ENCODE measurements at regions of chr20 and their contacts with region 1.

Region 1: GRCh38 chr20:1509237-1509636 is 18.0 kb upstream of the SIRPB2 start:
- DNase-seq: peak; percentile 49
- H3K4me3 Mint-ChIP-seq: no peak overlapping the region
- H3K27ac Mint-ChIP-seq: no peak overlapping the region
- H3K4me1 Mint-ChIP-seq: peaks cover 24% of the 10 kb centered on the region
- H3K27me3 Mint-ChIP-seq: peaks cover 14% of the 10 kb centered on the region
- CTCF ChIP-seq: peak; percentile 65

Region 2: GRCh38 chr20:1301031-1301529 is 208.2 kb before region 1 on chr20:
- CTCF ChIA-PET with region 1: no interaction called
- POLR2A ChIA-PET with region 1: no interaction called
- intact Hi-C with region 1: no loop called
- DNase-seq: peak; percentile 58
- H3K4me3 Mint-ChIP-seq: no peak overlapping the region
- H3K27ac Mint-ChIP-seq: peak overlapping the region; percentile 20
- H3K4me1 Mint-ChIP-seq: peaks cover 15% of the 10 kb centered on the region
- H3K27me3 Mint-ChIP-seq: no peaks in the 10 kb centered on the region
- CTCF ChIP-seq: no peak

Region 3: GRCh38 chr20:1528811-1529210 is 19.6 kb after region 1 on chr20:
- CTCF ChIA-PET with region 1: interaction called, 16 read pairs
- POLR2A ChIA-PET with region 1: interaction called, 3 read pairs
- intact Hi-C with region 1: no loop called
- DNase-seq: peak; percentile 65
- H3K4me3 Mint-ChIP-seq: no peak overlapping the region
- H3K27ac Mint-ChIP-seq: no peak overlapping the region
- H3K4me1 Mint-ChIP-seq: no peaks in the 10 kb centered on the region
- H3K27me3 Mint-ChIP-seq: no peaks in the 10 kb centered on the region
- CTCF ChIP-seq: no peak

Region 4: GRCh38 chr20:1539816-1540419 is 30.7 kb after region 1 on chr20:
- CTCF ChIA-PET with region 1: no interaction called
- POLR2A ChIA-PET with region 1: no interaction called
- intact Hi-C with region 1: no loop called
- DNase-seq: no peak
- H3K4me3 Mint-ChIP-seq: no peak overlapping the region
- H3K27ac Mint-ChIP-seq: no peak overlapping the region
- H3K4me1 Mint-ChIP-seq: no peaks in the 10 kb centered on the region
- H3K27me3 Mint-ChIP-seq: peaks cover 12% of the 10 kb centered on the region
- CTCF ChIP-seq: no peak

Region 5: DNA sequence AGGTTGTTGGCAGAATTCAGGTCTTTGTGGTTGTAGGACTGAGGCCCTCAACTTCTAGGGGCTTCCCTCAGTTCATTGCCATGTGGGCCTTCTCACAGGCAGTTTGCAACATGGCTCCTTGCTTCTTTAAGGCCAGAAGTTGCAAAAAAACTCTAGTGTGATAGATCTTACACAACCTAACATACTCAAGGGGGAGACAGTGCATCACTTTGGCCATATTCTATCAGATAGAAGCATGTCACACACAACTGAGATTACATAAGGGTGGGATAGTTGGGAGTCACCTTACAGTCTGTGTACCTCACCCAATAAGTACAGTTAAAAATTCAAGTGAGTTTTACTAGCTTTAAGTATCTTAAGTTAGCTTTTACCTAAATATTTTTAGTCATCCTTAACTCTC is 46.7 kb after region 1 on chr20:
- CTCF ChIA-PET with region 1: no interaction called
- POLR2A ChIA-PET with region 1: no interaction called
- intact Hi-C with region 1: no loop called
- DNase-seq: no peak
- H3K4me3 Mint-ChIP-seq: no peak overlapping the region
- H3K27ac Mint-ChIP-seq: no peak overlapping the region
- H3K4me1 Mint-ChIP-seq: no peaks in the 10 kb centered on the region
- H3K27me3 Mint-ChIP-seq: no peaks in the 10 kb centered on the region
- CTCF ChIP-seq: no peak

Region 6: GRCh38 chr20:1718604-1719384 is 209.6 kb after region 1 on chr20:
- CTCF ChIA-PET with region 1: interaction called, 15 read pairs
- POLR2A ChIA-PET with region 1: interaction called, 14 read pairs
- intact Hi-C with region 1: no loop called
- DNase-seq: peak; percentile 98
- H3K4me3 Mint-ChIP-seq: peak overlapping the region; percentile 4
- H3K27ac Mint-ChIP-seq: peak overlapping the region; percentile 37
- H3K4me1 Mint-ChIP-seq: peaks cover 22% of the 10 kb centered on the region
- H3K27me3 Mint-ChIP-seq: no peaks in the 10 kb centered on the region
- CTCF ChIP-seq: no peak

Region 7: DNA sequence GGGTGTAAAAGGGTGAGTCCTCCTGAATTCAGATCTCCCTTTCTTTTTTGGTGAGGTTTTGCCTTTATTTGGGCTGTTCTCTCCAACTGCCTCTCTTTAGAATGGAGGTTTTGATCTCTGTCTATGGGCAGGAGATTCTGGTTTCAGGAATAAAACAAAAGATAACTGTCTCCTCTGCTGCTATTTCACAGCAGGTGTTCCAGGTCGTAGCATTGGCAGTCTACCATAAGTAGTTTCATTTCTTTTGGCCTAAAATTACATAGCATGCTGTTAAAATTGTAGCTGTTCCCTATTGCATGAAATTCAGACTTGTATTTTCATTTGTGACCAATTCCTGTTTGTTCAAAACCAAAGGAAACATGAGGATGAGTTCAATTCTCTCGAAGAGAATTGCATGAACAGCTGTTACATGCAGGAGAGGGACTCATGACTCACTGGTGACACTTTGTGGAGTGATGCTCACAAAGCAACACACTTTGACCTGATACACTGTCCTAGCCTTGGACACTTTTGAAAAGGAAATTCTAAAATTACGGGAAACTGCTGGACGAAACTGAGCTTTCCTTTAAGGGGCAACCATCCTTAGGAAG is 225.1 kb after region 1 on chr20:
- CTCF ChIA-PET with region 1: interaction called, 152 read pairs
- POLR2A ChIA-PET with region 1: interaction called, 20 read pairs
- intact Hi-C with region 1: loop called (anchors 1 kb)
- DNase-seq: peak; percentile 52
- H3K4me3 Mint-ChIP-seq: no peak overlapping the region
- H3K27ac Mint-ChIP-seq: no peak overlapping the region
- H3K4me1 Mint-ChIP-seq: no peaks in the 10 kb centered on the region
- H3K27me3 Mint-ChIP-seq: no peaks in the 10 kb centered on the region
- CTCF ChIP-seq: peak; percentile 48

Region 8: GRCh38 chr20:1764136-1765033 is 255.1 kb after region 1 on chr20:
- CTCF ChIA-PET with region 1: interaction called, 33 read pairs
- POLR2A ChIA-PET with region 1: interaction called, 4 read pairs
- intact Hi-C with region 1: no loop called
- DNase-seq: peak; percentile 84
- H3K4me3 Mint-ChIP-seq: no peak overlapping the region
- H3K27ac Mint-ChIP-seq: no peak overlapping the region
- H3K4me1 Mint-ChIP-seq: peaks cover 10% of the 10 kb centered on the region
- H3K27me3 Mint-ChIP-seq: no peaks in the 10 kb centered on the region
- CTCF ChIP-seq: peak; percentile 54

Region 9: GRCh38 chr20:1776681-1777475 is 267.6 kb after region 1 on chr20:
- CTCF ChIA-PET with region 1: interaction called, 48 read pairs
- POLR2A ChIA-PET with region 1: interaction called, 12 read pairs
- intact Hi-C with region 1: loop called (anchors 1 kb)
- DNase-seq: peak; percentile 87
- H3K4me3 Mint-ChIP-seq: peak overlapping the region; percentile 84
- H3K27ac Mint-ChIP-seq: peak overlapping the region; percentile 89
- H3K4me1 Mint-ChIP-seq: peaks cover 18% of the 10 kb centered on the region
- H3K27me3 Mint-ChIP-seq: peaks cover 14% of the 10 kb centered on the region
- CTCF ChIP-seq: peak; percentile 75

Measured in MCF 10A (cell line).